ENCODE measurements at regions of chr5 and their contacts with region 1.

Region 1: DNA sequence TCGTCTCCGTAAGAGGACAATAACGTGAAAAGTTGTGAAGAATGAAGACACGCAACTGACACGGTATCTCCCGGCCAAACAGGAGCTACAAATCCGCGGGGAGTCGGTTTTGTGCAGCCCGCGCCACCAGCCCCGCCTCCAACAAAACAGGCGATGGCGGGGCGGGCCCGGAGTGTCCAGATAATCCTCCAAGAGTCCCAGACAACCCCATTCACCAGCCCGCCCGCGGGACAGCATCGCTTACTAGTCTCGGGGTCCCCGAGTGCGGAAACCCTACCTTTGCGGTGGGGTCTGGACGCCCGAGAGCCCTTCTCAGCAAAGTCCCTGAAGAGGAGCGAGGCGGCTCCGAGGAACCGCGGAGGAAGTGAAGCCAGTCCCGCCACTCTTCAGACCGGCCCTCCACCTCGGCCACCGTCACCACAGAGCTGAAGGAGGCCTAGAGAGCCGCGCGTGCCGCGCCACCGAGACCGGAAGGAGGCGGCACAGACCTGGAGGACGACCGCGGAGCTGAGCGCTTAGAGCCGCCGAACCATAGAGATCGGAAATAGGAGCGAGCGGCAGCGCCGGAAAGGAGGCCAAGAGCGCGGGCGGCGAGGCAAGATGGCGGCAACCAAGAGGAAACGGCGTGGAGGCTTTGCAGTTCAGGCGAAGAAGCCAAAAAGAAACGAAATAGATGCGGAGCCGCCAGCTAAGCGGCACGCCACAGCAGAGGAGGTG is at the starts of genes BRIX1 and RAD1:
- DNase-seq: peak; percentile 97
- H3K4me3 ChIP-seq: peak within 1 kb of the TSS; percentile 75
- H3K4me3 Mint-ChIP-seq: no peak within 1 kb of the TSS
- H3K27ac Mint-ChIP-seq: no peak within 1 kb of the TSS
- H3K4me1 ChIP-seq: peaks cover 14% of the 10 kb centered on the region; the same call in 1 of the 2 replicates
- H3K4me1 Mint-ChIP-seq: peaks cover 15% of the 10 kb centered on the region
- H3K27me3 ChIP-seq: no peaks in the 10 kb centered on the region
- H3K27me3 Mint-ChIP-seq: no peaks in the 10 kb centered on the region
- CTCF ChIP-seq: peak in 1 of 2 experiments; percentile 35
- total RNA-seq, gene BRIX1: 56.5 and 61.1 TPM in 2 replicates
- total RNA-seq, gene RAD1: 29.1 and 34.4 TPM in 2 replicates

Region 2: GRCh38 chr5:34007621-34008600 is 907.4 kb before region 1 on chr5 and contains the start of gene AMACR:
- CTCF ChIA-PET with region 1: no interaction called
- POLR2A ChIA-PET with region 1: no interaction called
- intact Hi-C with region 1: loop called (anchors 2 kb)
- DNase-seq: peak; percentile 95 to 97
- H3K4me3 ChIP-seq: peak within 1 kb of the TSS; percentile 85
- H3K4me3 Mint-ChIP-seq: peak within 1 kb of the TSS; percentile 84
- H3K27ac Mint-ChIP-seq: peak within 1 kb of the TSS; percentile 85
- H3K4me1 ChIP-seq: peaks cover 50% of the 10 kb centered on the region
- H3K4me1 Mint-ChIP-seq: peaks cover 45% of the 10 kb centered on the region
- H3K27me3 ChIP-seq: no peaks in the 10 kb centered on the region
- H3K27me3 Mint-ChIP-seq: no peaks in the 10 kb centered on the region
- CTCF ChIP-seq: no peak
- total RNA-seq, gene AMACR: 196 and 204 TPM in 2 replicates

Region 3: GRCh38 chr5:34686762-34687268 is 228.5 kb before region 1 on chr5:
- CTCF ChIA-PET with region 1: no interaction called
- POLR2A ChIA-PET with region 1: interaction called, 15 read pairs
- intact Hi-C with region 1: no loop called
- DNase-seq: peak; percentile 85 to 90
- H3K4me3 ChIP-seq: no peak overlapping the region
- H3K4me3 Mint-ChIP-seq: peak overlapping the region; percentile 67
- H3K27ac Mint-ChIP-seq: peak overlapping the region; percentile 88
- H3K4me1 ChIP-seq: peaks cover 53% of the 10 kb centered on the region
- H3K4me1 Mint-ChIP-seq: peaks cover 43% of the 10 kb centered on the region
- H3K27me3 ChIP-seq: no peaks in the 10 kb centered on the region
- H3K27me3 Mint-ChIP-seq: no peaks in the 10 kb centered on the region
- CTCF ChIP-seq: no peak

Region 4: GRCh38 chr5:34789021-34789531 is 126.2 kb before region 1 on chr5:
- CTCF ChIA-PET with region 1: no interaction called
- POLR2A ChIA-PET with region 1: no interaction called
- intact Hi-C with region 1: no loop called
- DNase-seq: no peak
- H3K4me3 ChIP-seq: no peak overlapping the region
- H3K4me3 Mint-ChIP-seq: no peak overlapping the region
- H3K27ac Mint-ChIP-seq: no peak overlapping the region
- H3K4me1 ChIP-seq: no peaks in the 10 kb centered on the region
- H3K4me1 Mint-ChIP-seq: no peaks in the 10 kb centered on the region
- H3K27me3 ChIP-seq: no peaks in the 10 kb centered on the region
- H3K27me3 Mint-ChIP-seq: no peaks in the 10 kb centered on the region
- CTCF ChIP-seq: no peak

Region 5: GRCh38 chr5:34838785-34839714 is 76.2 kb before region 1 on chr5 and contains the start of gene TTC23L:
- CTCF ChIA-PET with region 1: no interaction called
- POLR2A ChIA-PET with region 1: interaction called, 11 read pairs
- intact Hi-C with region 1: no loop called
- DNase-seq: peak; percentile 92 to 93
- H3K4me3 ChIP-seq: peak within 1 kb of the TSS; percentile 72
- H3K4me3 Mint-ChIP-seq: peak within 1 kb of the TSS; percentile 86
- H3K27ac Mint-ChIP-seq: peak within 1 kb of the TSS; percentile 96
- H3K4me1 ChIP-seq: peaks cover 6% of the 10 kb centered on the region; the same call in 1 of the 2 replicates
- H3K4me1 Mint-ChIP-seq: peaks cover 13% of the 10 kb centered on the region
- H3K27me3 ChIP-seq: no peaks in the 10 kb centered on the region
- H3K27me3 Mint-ChIP-seq: no peaks in the 10 kb centered on the region
- CTCF ChIP-seq: no peak
- total RNA-seq, gene TTC23L: 0.09 and 0.72 TPM in 2 replicates

Region 6: DNA sequence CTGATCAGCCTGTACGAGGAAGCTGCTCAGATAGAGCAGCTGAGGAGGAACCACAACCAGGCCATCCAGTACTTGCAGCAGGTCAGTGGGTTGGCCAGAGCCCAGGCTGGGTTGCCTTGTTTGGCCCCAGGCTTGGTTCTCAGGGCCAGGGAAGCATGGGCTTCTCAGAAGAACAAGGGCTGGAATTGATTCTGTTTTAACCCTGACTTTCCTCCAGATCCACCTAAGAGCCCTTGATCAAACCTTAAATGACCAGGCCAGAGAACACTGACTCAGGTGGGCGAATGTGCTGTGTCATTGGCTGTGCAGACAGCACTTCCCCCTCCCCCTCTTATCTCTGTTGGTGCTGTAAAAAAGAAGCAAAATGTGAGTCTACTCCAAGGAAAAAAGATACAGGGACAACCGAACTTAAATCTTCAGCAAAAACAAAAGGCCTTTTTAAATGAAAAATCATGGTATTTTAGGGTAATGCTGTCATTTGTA is 48.3 kb before region 1 on chr5:
- CTCF ChIA-PET with region 1: no interaction called
- POLR2A ChIA-PET with region 1: no interaction called
- intact Hi-C with region 1: loop called (anchors 2 kb)
- DNase-seq: peak in 1 of 2 experiments; percentile 8
- H3K4me3 ChIP-seq: no peak overlapping the region
- H3K4me3 Mint-ChIP-seq: no peak overlapping the region
- H3K27ac Mint-ChIP-seq: peak overlapping the region; percentile 41
- H3K4me1 ChIP-seq: peaks cover 14% of the 10 kb centered on the region
- H3K4me1 Mint-ChIP-seq: peaks cover 10% of the 10 kb centered on the region
- H3K27me3 ChIP-seq: no peaks in the 10 kb centered on the region
- H3K27me3 Mint-ChIP-seq: no peaks in the 10 kb centered on the region
- CTCF ChIP-seq: no peak

Region 7: GRCh38 chr5:34886392-34887119 is 28.7 kb before region 1 on chr5:
- CTCF ChIA-PET with region 1: no interaction called
- POLR2A ChIA-PET with region 1: no interaction called
- intact Hi-C with region 1: no loop called
- DNase-seq: no peak
- H3K4me3 ChIP-seq: no peak overlapping the region
- H3K4me3 Mint-ChIP-seq: no peak overlapping the region
- H3K27ac Mint-ChIP-seq: no peak overlapping the region
- H3K4me1 ChIP-seq: no peaks in the 10 kb centered on the region
- H3K4me1 Mint-ChIP-seq: no peaks in the 10 kb centered on the region
- H3K27me3 ChIP-seq: no peaks in the 10 kb centered on the region
- H3K27me3 Mint-ChIP-seq: no peaks in the 10 kb centered on the region
- CTCF ChIP-seq: no peak

Region 8: DNA sequence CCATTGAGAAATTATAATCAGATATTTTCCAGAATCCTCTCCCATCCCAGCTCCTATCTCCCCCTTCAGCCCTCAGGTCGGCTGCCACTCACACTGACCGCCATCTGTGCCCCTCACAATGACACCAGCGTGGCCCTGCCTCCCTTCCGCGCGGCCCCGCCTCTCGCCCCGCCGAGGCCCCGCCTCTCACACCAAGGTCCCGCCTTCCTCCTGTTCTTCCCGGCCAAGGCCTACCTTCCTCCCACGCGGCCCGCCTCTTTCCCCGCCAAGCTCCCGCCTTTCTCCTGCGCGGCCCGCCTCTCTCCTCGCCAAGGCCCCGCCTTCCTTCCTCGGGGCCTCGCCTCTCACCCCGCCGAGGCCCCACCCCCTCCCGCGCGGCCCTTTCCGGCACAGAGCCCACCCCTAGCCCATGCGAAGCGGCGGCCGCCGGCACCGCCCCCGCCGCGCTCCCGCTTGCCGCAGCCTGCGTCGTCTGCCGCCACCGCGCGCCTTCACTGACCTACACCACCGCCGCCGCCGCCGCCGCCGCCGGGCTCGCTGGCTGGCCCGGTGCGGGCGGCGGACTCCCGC is 13.9 kb after region 1 on chr5 and contains the start of gene DNAJC21:
- CTCF ChIA-PET with region 1: interaction called, 31 read pairs
- POLR2A ChIA-PET with region 1: interaction called, 60 read pairs
- intact Hi-C with region 1: loop called (anchors 2 kb)
- DNase-seq: peak; percentile 98
- H3K4me3 ChIP-seq: peak within 1 kb of the TSS; percentile 99
- H3K4me3 Mint-ChIP-seq: peak within 1 kb of the TSS; percentile 70
- H3K27ac Mint-ChIP-seq: peak within 1 kb of the TSS; percentile 23
- H3K4me1 ChIP-seq: peaks cover 17% of the 10 kb centered on the region; the same call in 1 of the 2 replicates
- H3K4me1 Mint-ChIP-seq: peaks cover 15% of the 10 kb centered on the region
- H3K27me3 ChIP-seq: no peaks in the 10 kb centered on the region
- H3K27me3 Mint-ChIP-seq: no peaks in the 10 kb centered on the region
- CTCF ChIP-seq: no peak
- total RNA-seq, gene DNAJC21: 62.3 and 66.0 TPM in 2 replicates

Measured in Caco-2 (cell line).